CD8-positive, alpha-beta T cell (primary cell): ENCODE measurements at regions of chr9 and their contacts with region 1.

Region 1: GRCh38 chr9:112097712-112098688 is 77.1 kb downstream of the SUSD1 start:
- DNase-seq: peak; percentile 41 to 84 (median 65)
- ATAC-seq: peak; percentile 78
- H3K4me3 ChIP-seq: no peak overlapping the region
- H3K4me3 Mint-ChIP-seq: no peak overlapping the region
- H3K27ac ChIP-seq: no peak overlapping the region
- H3K27ac Mint-ChIP-seq: no peak overlapping the region
- H3K4me1 ChIP-seq: peaks cover 4% of the 10 kb centered on the region
- H3K4me1 Mint-ChIP-seq: peaks cover 20% of the 10 kb centered on the region
- H3K27me3 ChIP-seq: no peaks in the 10 kb centered on the region
- H3K27me3 Mint-ChIP-seq: no peaks in the 10 kb centered on the region
- CTCF ChIP-seq: peak; percentile 89

Region 2: GRCh38 chr9:112086627-112087026 is 11.4 kb before region 1 on chr9:
- CTCF ChIA-PET with region 1: interaction called, 13 read pairs
- POLR2A ChIA-PET with region 1: no interaction called
- intact Hi-C with region 1: no loop called
- DNase-seq: peak in 2 of 9 experiments; percentile 31 to 42
- ATAC-seq: no peak
- H3K4me3 ChIP-seq: no peak overlapping the region
- H3K4me3 Mint-ChIP-seq: no peak overlapping the region
- H3K27ac ChIP-seq: no peak overlapping the region
- H3K27ac Mint-ChIP-seq: no peak overlapping the region
- H3K4me1 ChIP-seq: no peaks in the 10 kb centered on the region
- H3K4me1 Mint-ChIP-seq: no peaks in the 10 kb centered on the region
- H3K27me3 ChIP-seq: no peaks in the 10 kb centered on the region
- H3K27me3 Mint-ChIP-seq: no peaks in the 10 kb centered on the region
- CTCF ChIP-seq: peak; percentile 55

Region 3: DNA sequence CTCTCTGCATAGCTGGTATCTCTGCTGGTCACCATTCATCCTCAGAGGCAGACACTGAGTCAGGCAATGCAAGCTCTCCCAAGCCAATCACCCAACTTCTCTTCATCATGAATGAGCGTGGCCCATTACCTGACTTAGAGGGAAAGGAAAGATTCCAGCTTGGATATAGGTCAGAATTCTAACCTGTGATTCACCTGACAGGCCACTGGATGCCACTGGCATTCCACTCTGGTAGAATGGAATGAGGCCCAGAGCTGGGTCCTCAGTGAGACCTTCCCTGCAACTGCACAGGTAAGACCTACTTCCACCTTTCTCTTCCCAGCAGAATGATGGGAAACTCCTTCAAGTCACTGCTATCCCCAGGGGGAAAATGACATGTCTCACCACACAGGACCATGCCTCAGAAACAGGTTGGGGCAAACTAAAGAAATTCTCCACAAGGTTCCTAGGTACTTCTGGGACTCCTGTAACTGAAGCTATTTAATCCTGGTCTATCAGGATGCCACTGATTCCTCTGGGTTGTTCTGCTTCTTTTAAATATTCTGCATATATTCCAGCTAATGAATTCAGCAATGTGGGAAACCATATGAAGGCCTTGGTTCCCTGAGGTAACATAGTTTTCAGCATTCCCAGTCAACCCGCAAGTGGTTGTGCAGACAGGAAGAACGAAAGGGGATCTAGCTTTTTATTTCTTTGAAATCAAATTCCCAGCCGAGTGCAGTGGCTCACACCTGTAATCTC is 15.1 kb after region 1 on chr9:
- CTCF ChIA-PET with region 1: interaction called, 10 read pairs
- POLR2A ChIA-PET with region 1: no interaction called
- intact Hi-C with region 1: no loop called
- DNase-seq: peak in 4 of 9 experiments; percentile 13 to 50 (median 36)
- ATAC-seq: peak; percentile 48
- H3K4me3 ChIP-seq: no peak overlapping the region
- H3K4me3 Mint-ChIP-seq: no peak overlapping the region
- H3K27ac ChIP-seq: no peak overlapping the region
- H3K27ac Mint-ChIP-seq: no peak overlapping the region
- H3K4me1 ChIP-seq: no peaks in the 10 kb centered on the region
- H3K4me1 Mint-ChIP-seq: no peaks in the 10 kb centered on the region
- H3K27me3 ChIP-seq: no peaks in the 10 kb centered on the region
- H3K27me3 Mint-ChIP-seq: no peaks in the 10 kb centered on the region
- CTCF ChIP-seq: peak; percentile 55

Region 4: DNA sequence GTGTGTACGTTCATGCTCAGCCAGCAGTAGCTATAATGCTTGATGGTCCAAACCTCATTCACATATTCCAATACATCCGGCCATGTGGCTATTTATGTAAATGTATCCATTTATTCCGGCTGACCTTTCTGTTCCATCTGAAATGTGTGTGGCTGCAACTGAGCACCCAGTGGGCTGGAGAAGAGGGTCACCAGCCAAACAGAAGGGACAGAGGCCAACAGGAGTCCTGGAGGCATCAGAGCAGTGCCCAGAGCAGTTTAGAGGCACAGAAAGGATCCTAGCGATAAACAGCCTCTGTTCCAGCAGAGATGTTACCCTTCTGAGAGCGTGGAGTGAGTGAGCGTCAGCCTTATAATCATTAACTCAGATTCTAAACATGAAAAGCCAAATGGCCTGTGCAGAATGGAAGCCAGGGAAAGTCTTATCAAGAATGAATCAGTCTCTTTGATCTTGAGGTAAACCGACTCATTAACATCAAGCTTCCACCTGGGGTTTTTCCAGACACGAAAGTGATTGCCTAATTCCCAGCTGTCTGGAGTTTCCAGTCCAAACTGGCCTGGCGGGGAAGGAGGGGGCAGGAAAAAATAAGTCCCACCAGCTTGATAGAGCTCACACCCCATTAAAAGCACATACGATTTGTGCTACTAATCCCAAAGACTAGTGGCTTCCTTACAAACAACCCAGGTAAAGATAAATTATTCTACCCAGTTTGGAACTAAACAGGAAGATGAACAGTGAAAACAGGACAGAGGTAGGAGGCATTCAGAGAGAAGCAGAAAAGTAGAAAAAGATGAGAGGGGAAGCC is 21.4 kb after region 1 on chr9:
- CTCF ChIA-PET with region 1: interaction called, 12 read pairs
- POLR2A ChIA-PET with region 1: no interaction called
- intact Hi-C with region 1: no loop called
- DNase-seq: no peak
- ATAC-seq: no peak
- H3K4me3 ChIP-seq: no peak overlapping the region
- H3K4me3 Mint-ChIP-seq: no peak overlapping the region
- H3K27ac ChIP-seq: no peak overlapping the region
- H3K27ac Mint-ChIP-seq: no peak overlapping the region
- H3K4me1 ChIP-seq: no peaks in the 10 kb centered on the region
- H3K4me1 Mint-ChIP-seq: no peaks in the 10 kb centered on the region
- H3K27me3 ChIP-seq: no peaks in the 10 kb centered on the region
- H3K27me3 Mint-ChIP-seq: no peaks in the 10 kb centered on the region
- CTCF ChIP-seq: no peak

Region 5: GRCh38 chr9:112166172-112167140 is 68.5 kb after region 1 on chr9:
- CTCF ChIA-PET with region 1: no interaction called
- POLR2A ChIA-PET with region 1: no interaction called
- intact Hi-C with region 1: no loop called
- DNase-seq: peak in 1 of 9 experiments; percentile 5
- ATAC-seq: no peak
- H3K4me3 ChIP-seq: no peak overlapping the region
- H3K4me3 Mint-ChIP-seq: no peak overlapping the region
- H3K27ac ChIP-seq: no peak overlapping the region
- H3K27ac Mint-ChIP-seq: no peak overlapping the region
- H3K4me1 ChIP-seq: peaks cover 11% of the 10 kb centered on the region
- H3K4me1 Mint-ChIP-seq: peaks cover 39% of the 10 kb centered on the region
- H3K27me3 ChIP-seq: no peaks in the 10 kb centered on the region
- H3K27me3 Mint-ChIP-seq: no peaks in the 10 kb centered on the region
- CTCF ChIP-seq: no peak

Region 6: GRCh38 chr9:112224401-112225289 is 126.6 kb after region 1 on chr9:
- CTCF ChIA-PET with region 1: interaction called, 3 read pairs
- POLR2A ChIA-PET with region 1: no interaction called
- intact Hi-C with region 1: loop called (anchors 10 kb)
- DNase-seq: no peak
- ATAC-seq: no peak
- H3K4me3 ChIP-seq: no peak overlapping the region
- H3K4me3 Mint-ChIP-seq: no peak overlapping the region
- H3K27ac ChIP-seq: no peak overlapping the region
- H3K27ac Mint-ChIP-seq: no peak overlapping the region
- H3K4me1 ChIP-seq: no peaks in the 10 kb centered on the region
- H3K4me1 Mint-ChIP-seq: peaks cover 6% of the 10 kb centered on the region
- H3K27me3 ChIP-seq: no peaks in the 10 kb centered on the region
- H3K27me3 Mint-ChIP-seq: no peaks in the 10 kb centered on the region
- CTCF ChIP-seq: no peak